Activated CD4-positive, alpha-beta T cell treated with anti-CD3 and anti-CD28 coated beads for 36 hours (primary cell): ENCODE measurements at regions of chr1 and their contacts with region 1.

Region 1: DNA sequence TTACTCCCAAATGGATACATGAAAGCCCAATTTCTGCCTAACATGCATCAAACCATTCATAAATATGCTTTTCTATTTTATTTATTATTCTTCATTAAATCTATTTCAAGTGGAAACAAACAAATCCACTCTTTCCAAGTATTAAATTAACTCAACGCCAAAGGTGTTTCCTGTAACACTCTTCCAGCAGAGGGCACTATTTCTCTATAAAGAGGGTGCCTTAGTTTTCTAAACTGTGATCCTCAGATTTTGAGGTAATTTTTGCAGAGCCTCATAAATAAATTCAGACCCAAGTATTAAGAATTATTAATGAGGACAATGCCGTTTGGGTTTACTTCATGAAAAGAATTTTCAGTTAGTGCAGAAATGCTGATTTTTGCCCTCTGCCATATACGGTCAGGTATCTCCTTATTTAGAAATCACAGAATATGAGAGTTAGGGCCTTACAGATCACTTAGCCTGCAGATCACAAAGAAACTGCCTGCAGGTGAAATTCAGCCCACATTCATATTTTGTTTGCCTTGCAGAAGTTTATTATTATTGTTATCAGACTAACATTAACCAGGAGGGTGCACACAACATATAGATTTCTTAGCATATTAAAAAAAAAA is 40.1 kb upstream of the MYSM1 start:
- DNase-seq: no peak
- ATAC-seq: peak; percentile 44
- H3K4me3 Mint-ChIP-seq: no peak overlapping the region
- H3K27ac Mint-ChIP-seq: no peak overlapping the region
- H3K4me1 Mint-ChIP-seq: no peaks in the 10 kb centered on the region
- H3K27me3 Mint-ChIP-seq: peaks cover 2% of the 10 kb centered on the region

Region 2: GRCh38 chr1:58584082-58584895 is 155.7 kb before region 1 on chr1:
- CTCF ChIA-PET with region 1: no interaction called
- POLR2A ChIA-PET with region 1: no interaction called
- intact Hi-C with region 1: no loop called
- DNase-seq: no peak
- ATAC-seq: peak; percentile 83
- H3K4me3 Mint-ChIP-seq: no peak overlapping the region
- H3K27ac Mint-ChIP-seq: no peak overlapping the region
- H3K4me1 Mint-ChIP-seq: peaks cover 11% of the 10 kb centered on the region
- H3K27me3 Mint-ChIP-seq: peaks cover 41% of the 10 kb centered on the region

Region 3: DNA sequence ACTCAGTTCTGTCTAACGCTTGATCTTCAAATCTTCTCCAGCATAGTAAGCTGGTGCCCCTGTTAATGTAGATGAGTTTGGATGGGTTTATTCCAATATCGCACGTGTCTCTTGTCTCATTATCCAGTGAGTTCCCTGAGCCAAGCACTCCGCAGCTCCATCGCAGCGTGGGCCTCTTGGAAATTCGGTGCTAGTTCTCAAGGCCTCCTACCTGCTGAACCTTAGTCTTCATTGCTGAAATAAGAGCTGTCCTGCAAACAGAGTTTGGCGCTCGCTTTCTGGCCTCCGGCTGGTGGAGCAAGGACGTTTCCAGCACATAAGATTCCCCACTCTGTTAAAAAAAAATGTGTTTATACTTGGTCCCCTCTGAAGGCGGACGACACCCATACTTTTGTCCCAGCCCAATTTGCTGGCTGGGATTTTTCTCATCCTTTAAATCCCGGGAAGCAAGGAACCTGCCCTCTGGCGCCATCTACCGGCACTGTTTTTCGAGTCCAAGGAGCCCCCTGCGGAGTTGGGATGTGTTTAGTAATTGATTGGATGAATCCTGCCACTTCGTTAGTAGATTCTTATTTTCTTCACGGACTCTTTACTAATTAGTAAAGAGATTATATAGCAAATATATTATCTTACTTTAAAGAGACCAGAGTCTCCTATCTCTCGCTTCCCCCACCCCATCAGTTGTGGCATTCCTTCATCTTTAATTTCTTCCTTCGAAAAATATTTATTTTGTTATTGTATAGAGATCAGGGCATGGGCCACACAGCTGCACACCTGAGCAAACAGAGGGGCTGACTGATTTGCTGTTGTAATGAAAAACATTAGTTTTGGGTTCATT is 29.2 kb after region 1 on chr1:
- CTCF ChIA-PET with region 1: interaction called, 15 read pairs
- POLR2A ChIA-PET with region 1: interaction called, 3 read pairs
- intact Hi-C with region 1: loop called (anchors 1 kb)
- DNase-seq: peak; percentile 72
- ATAC-seq: no peak
- H3K4me3 Mint-ChIP-seq: no peak overlapping the region
- H3K27ac Mint-ChIP-seq: no peak overlapping the region
- H3K4me1 Mint-ChIP-seq: peaks cover 12% of the 10 kb centered on the region
- H3K27me3 Mint-ChIP-seq: no peaks in the 10 kb centered on the region

Region 4: GRCh38 chr1:59149435-59149834 is 409.5 kb after region 1 on chr1:
- CTCF ChIA-PET with region 1: no interaction called
- POLR2A ChIA-PET with region 1: no interaction called
- intact Hi-C with region 1: loop called in 1 of 2 experiments (anchors 2 kb)
- DNase-seq: no peak
- ATAC-seq: no peak
- H3K4me3 Mint-ChIP-seq: no peak overlapping the region
- H3K27ac Mint-ChIP-seq: no peak overlapping the region
- H3K4me1 Mint-ChIP-seq: peaks cover 20% of the 10 kb centered on the region
- H3K27me3 Mint-ChIP-seq: peaks cover 2% of the 10 kb centered on the region

Region 5: DNA sequence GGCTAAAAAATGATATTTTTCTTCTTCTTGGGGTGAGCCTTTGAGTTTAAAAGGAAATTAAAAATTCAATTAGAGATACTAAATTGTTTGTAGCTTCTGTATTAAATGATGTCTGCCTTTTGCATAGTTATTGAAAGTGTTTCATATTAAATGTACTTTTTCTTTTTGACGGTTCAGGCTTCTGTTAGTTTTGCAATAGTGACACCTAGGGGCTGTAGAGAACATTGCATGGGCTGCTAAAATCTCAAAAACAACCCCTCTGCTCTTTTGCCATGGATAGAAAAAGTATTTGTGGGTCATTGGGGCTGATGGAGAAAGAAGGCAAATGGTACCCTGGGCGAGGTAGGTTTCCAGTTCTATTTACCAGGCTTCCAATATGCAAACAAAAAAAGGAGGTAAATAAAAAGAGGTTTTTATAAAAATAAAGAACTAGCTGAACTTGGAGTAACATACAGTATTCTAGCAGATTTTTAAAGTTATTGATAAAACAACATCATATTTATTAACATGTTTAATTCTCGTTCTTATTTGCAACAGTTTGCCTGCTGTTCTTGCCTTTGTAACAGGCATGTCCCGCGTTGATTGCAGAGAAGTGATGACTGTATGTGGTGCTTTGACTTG is 959.4 kb after region 1 on chr1:
- CTCF ChIA-PET with region 1: interaction called, 14 read pairs
- POLR2A ChIA-PET with region 1: interaction called, 6 read pairs
- intact Hi-C with region 1: loop called (anchors 1 kb)
- DNase-seq: peak; percentile 12
- ATAC-seq: peak; percentile 33
- H3K4me3 Mint-ChIP-seq: no peak overlapping the region
- H3K27ac Mint-ChIP-seq: no peak overlapping the region
- H3K4me1 Mint-ChIP-seq: peaks cover 21% of the 10 kb centered on the region
- H3K27me3 Mint-ChIP-seq: no peaks in the 10 kb centered on the region